CD4-positive, alpha-beta T cell (primary cell): ENCODE measurements at regions of chr1 and their contacts with region 1.

Region 1: GRCh38 chr1:39196244-39197215 is 8.0 kb upstream of the MACF1 start:
- DNase-seq: peak; percentile 31 to 94 (median 61)
- ATAC-seq: peak; percentile 66
- H3K4me3 ChIP-seq: peak overlapping the region; percentile 2
- H3K4me3 Mint-ChIP-seq: peak overlapping the region; percentile 77
- H3K27ac ChIP-seq: peak overlapping the region; percentile 81 to 85
- H3K27ac Mint-ChIP-seq: peak overlapping the region; percentile 93
- H3K4me1 ChIP-seq: peaks cover 68% of the 10 kb centered on the region
- H3K4me1 Mint-ChIP-seq: peaks cover 82% of the 10 kb centered on the region
- H3K27me3 ChIP-seq: no peaks in the 10 kb centered on the region
- H3K27me3 Mint-ChIP-seq: no peaks in the 10 kb centered on the region
- CTCF ChIP-seq: no peak

Region 2: GRCh38 chr1:39214998-39215873 is 18.7 kb after region 1 on chr1:
- CTCF ChIA-PET with region 1: interaction called, 92 read pairs
- POLR2A ChIA-PET with region 1: interaction called, 47 read pairs
- intact Hi-C with region 1: loop called in 1 of 2 experiments (anchors 2 kb)
- DNase-seq: peak in 10 of 14 experiments; percentile 17 to 73 (median 32)
- ATAC-seq: peak; percentile 74
- H3K4me3 ChIP-seq: peak overlapping the region; percentile 62
- H3K4me3 Mint-ChIP-seq: peak overlapping the region; percentile 89
- H3K27ac ChIP-seq: peak overlapping the region; percentile 52 to 77
- H3K27ac Mint-ChIP-seq: peak overlapping the region; percentile 89
- H3K4me1 ChIP-seq: peaks cover 43% of the 10 kb centered on the region
- H3K4me1 Mint-ChIP-seq: peaks cover 59% of the 10 kb centered on the region
- H3K27me3 ChIP-seq: no peaks in the 10 kb centered on the region
- H3K27me3 Mint-ChIP-seq: no peaks in the 10 kb centered on the region
- CTCF ChIP-seq: no peak

Region 3: GRCh38 chr1:39230261-39231190 is 34.0 kb after region 1 on chr1:
- CTCF ChIA-PET with region 1: interaction called, 30 read pairs
- POLR2A ChIA-PET with region 1: interaction called, 8 read pairs
- intact Hi-C with region 1: no loop called
- DNase-seq: peak in 9 of 14 experiments; percentile 5 to 57 (median 37)
- ATAC-seq: peak; percentile 61
- H3K4me3 ChIP-seq: no peak overlapping the region
- H3K4me3 Mint-ChIP-seq: peak overlapping the region; percentile 64
- H3K27ac ChIP-seq: peak overlapping the region; percentile 6 to 44
- H3K27ac Mint-ChIP-seq: peak overlapping the region; percentile 89
- H3K4me1 ChIP-seq: peaks cover 44% of the 10 kb centered on the region
- H3K4me1 Mint-ChIP-seq: peaks cover 60% of the 10 kb centered on the region
- H3K27me3 ChIP-seq: no peaks in the 10 kb centered on the region
- H3K27me3 Mint-ChIP-seq: no peaks in the 10 kb centered on the region
- CTCF ChIP-seq: no peak

Region 4: DNA sequence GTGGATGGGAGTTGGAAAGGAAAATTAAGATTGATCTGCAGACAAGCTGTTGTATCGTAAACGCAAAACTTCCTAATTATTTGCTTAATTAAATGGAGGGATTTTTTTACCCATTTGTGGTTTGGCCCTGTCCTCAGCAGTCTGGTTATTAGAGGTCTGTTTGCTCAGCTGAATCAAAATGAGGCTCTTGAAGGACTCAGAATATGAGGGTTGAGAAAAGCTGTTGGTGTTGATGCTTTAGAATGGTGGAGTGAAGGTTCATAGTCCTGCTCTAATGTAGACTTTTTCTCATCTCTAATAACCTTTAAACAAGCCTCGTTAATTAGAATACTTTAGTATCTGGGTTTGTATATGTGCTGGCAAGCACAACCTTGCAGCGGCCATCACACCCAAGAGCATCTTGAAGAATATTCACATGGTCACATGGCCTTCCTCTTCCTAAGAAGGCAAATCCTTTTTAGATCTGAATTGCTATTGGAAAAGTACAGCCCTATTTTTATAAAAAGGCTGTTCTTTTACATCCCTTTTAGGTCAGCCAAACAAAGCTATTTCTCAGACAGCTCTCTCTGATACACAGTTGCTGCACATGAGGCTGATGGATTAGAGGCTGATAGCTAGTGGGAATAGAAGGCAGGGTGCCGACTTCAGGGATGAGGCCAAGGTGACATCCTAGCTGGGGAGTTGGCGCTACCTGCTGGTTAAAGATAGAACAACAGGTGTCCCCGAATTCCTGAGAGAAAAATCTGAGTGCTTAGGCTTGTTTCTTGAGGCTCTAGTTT is 61.8 kb after region 1 on chr1:
- CTCF ChIA-PET with region 1: interaction called, 376 read pairs
- POLR2A ChIA-PET with region 1: interaction called, 75 read pairs
- intact Hi-C with region 1: loop called (anchors 1 kb)
- DNase-seq: peak; percentile 38 to 83 (median 62)
- ATAC-seq: peak; percentile 78
- H3K4me3 ChIP-seq: no peak overlapping the region
- H3K4me3 Mint-ChIP-seq: no peak overlapping the region
- H3K27ac ChIP-seq: peak overlapping the region; percentile 13 to 38
- H3K27ac Mint-ChIP-seq: peak overlapping the region; percentile 83
- H3K4me1 ChIP-seq: peaks cover 14% of the 10 kb centered on the region
- H3K4me1 Mint-ChIP-seq: peaks cover 43% of the 10 kb centered on the region
- H3K27me3 ChIP-seq: no peaks in the 10 kb centered on the region
- H3K27me3 Mint-ChIP-seq: no peaks in the 10 kb centered on the region
- CTCF ChIP-seq: peak; percentile 88

Region 5: GRCh38 chr1:39275836-39276507 is 79.4 kb after region 1 on chr1:
- CTCF ChIA-PET with region 1: interaction called, 10 read pairs
- POLR2A ChIA-PET with region 1: interaction called, 9 read pairs
- intact Hi-C with region 1: no loop called
- DNase-seq: no peak
- ATAC-seq: no peak
- H3K4me3 ChIP-seq: no peak overlapping the region
- H3K4me3 Mint-ChIP-seq: no peak overlapping the region
- H3K27ac ChIP-seq: no peak overlapping the region
- H3K27ac Mint-ChIP-seq: peak overlapping the region; percentile 69
- H3K4me1 ChIP-seq: peaks cover 11% of the 10 kb centered on the region
- H3K4me1 Mint-ChIP-seq: peaks cover 68% of the 10 kb centered on the region
- H3K27me3 ChIP-seq: no peaks in the 10 kb centered on the region
- H3K27me3 Mint-ChIP-seq: no peaks in the 10 kb centered on the region
- CTCF ChIP-seq: no peak